ENCODE measurements at regions of chr2 and their contacts with region 1.

Region 1: GRCh38 chr2:108866040-108866439 is 79.5 kb downstream of the CCDC138 start:
- DNase-seq: no peak
- ATAC-seq: no peak

Region 2: DNA sequence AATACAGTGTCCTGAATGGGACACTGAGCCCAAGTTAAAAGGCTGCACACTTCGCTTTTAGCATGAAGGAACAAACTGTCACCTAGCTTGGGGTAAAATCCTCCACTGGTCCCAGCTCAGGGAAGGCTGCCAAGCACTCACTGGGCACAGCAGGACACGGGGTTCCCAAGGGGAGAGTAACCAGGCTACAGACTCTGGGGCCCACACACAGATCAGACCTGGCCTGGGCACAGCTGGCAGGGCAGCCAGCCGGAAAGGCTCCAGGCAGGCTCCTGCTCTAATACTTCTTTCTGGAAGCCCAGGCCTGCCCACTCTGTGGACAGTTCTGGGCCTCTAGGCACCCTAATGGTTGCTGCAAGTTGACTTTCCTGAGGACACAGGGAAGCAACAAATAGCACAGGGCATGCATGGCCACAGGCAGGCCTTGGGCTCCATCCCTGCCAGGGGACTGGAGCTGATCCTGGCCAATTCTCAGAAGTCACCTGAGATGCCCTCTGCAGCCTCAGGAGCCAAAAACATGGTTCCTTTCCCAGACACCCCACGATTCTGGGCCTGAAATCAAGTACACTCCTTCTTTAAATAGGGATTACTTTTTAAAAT is 645.0 kb before region 1 on chr2:
- intact Hi-C with region 1: no loop called
- DNase-seq: no peak
- ATAC-seq: peak; percentile 25 to 78

Region 3: DNA sequence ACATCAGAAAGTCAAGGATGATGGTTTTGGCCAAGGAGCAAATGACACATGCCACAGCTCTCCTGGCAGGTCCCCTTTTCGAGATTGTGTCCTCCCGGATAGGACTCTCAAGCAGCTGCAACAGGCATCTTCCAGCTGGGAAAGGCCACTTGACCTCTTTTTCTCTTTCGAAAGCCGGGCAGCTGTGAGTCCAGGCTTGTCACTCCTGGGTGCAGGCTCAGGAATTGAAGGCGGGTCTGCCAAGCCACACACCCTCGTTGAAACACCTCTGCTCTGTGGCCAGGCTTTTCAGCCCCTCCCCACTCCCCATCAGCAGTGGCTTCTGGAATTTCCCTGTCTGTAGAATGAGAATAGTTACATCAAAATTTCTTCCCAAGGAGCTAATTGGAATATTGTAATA is 18.6 kb after region 1 on chr2:
- intact Hi-C with region 1: loop called in 1 of 2 experiments (anchors 2 kb)
- DNase-seq: no peak
- ATAC-seq: no peak

Measured in left cardiac atrium (tissue), 4 donors.